Esophagus squamous epithelium (tissue), 5 donors: ENCODE measurements at regions of chr1 and their contacts with region 1.

Region 1: DNA sequence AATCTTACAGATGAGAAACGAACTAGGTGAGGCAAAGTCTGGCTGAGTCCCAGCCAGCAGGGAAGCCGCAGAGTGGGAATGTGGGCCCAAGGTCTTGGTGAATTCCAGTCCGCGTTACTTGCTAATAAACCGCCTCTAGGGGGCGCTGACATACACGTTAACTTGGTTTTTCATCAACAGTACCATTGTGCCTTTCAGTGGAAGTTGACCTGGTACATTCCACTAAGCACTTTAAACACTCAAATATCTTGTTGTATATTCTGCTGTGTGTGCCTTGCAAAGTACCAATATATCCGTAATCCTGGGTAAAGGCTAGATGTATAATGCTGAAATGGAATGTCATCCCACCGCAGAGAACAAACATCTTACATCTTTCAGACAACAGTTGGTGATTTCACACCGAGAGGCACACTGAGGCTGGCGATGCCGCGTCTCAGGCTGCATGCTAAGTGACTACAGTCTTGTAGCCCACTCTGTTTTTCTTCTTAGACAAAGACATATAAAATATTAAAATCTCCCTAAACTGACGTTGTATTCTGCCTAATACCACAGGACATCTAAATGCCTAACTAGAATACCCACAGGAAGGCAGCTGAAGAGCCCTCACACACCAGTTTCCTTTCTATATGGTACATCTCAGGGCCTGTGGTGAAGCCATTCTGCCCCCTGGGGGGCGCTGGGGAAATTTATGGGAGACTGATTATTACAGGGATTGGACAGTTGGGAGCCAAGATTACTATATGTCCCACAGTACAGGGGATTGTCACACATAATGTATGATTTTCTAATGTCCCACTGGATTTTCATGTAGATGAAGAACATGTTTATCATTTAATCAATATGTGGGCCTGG is 49.2 kb upstream of the C1orf198 start:
- DNase-seq: no peak
- H3K4me3 ChIP-seq: no peak overlapping the region
- H3K27ac ChIP-seq: no peak overlapping the region
- H3K4me1 ChIP-seq: no peaks in the 10 kb centered on the region
- H3K27me3 ChIP-seq: no peaks in the 10 kb centered on the region
- CTCF ChIP-seq: peak in 5 of 6 experiments; percentile 59 to 78 (median 65)
- POLR2A ChIP-seq: no peak

Region 2: DNA sequence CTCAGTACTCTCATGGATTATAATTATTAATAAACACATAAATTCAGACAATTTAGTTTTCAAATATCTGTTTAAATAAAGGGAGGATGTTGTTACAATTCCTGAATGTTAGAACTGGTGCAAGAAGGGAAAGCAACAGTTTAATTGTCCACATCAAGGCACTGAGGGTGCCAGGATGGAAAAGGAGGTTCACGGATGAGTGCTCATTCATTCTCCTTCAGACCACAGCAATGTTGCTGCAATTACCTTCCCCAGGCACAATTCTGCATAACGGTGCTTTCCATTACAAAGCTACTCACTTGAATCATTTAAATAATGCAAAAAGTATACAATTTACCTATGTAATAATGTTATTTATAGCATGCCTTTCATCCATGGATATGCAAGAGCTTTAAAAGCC is 327.6 kb before region 1 on chr1:
- intact Hi-C with region 1: no loop called
- DNase-seq: no peak
- H3K4me3 ChIP-seq: no peak overlapping the region
- H3K27ac ChIP-seq: no peak overlapping the region
- H3K4me1 ChIP-seq: no peaks in the 10 kb centered on the region
- H3K27me3 ChIP-seq: peaks cover 0 to 21% (median 0%) of the 10 kb centered on the region in 4 donors
- CTCF ChIP-seq: no peak
- POLR2A ChIP-seq: no peak

Region 3: GRCh38 chr1:231211005-231211857 is 293.7 kb after region 1 on chr1:
- intact Hi-C with region 1: loop called (anchors 10 kb)
- DNase-seq: peak; percentile 42
- H3K4me3 ChIP-seq: peak overlapping the region; percentile 34 to 68 (median 46)
- H3K27ac ChIP-seq: no peak overlapping the region
- H3K4me1 ChIP-seq: peaks cover 2 to 10% (median 8%) of the 10 kb centered on the region in 3 donors
- H3K27me3 ChIP-seq: peaks cover 0 to 25% (median 0%) of the 10 kb centered on the region in 4 donors
- CTCF ChIP-seq: peak; percentile 85 to 93 (median 91)
- POLR2A ChIP-seq: no peak